Activated CD4-positive, alpha-beta memory T cell treated with anti-CD3 and anti-CD28 coated beads for 36 hours (primary cell): ENCODE measurements at regions of chr6 and their contacts with region 1.

Region 1: GRCh38 chr6:45169815-45170214 is 158.3 kb upstream of the RUNX2 start:
- DNase-seq: no peak
- H3K4me3 Mint-ChIP-seq: no peak overlapping the region
- H3K27ac Mint-ChIP-seq: no peak overlapping the region
- H3K4me1 Mint-ChIP-seq: peaks cover 23% of the 10 kb centered on the region
- H3K27me3 Mint-ChIP-seq: no peaks in the 10 kb centered on the region

Region 2: GRCh38 chr6:44989391-44989790 is 180.4 kb before region 1 on chr6:
- CTCF ChIA-PET with region 1: no interaction called
- POLR2A ChIA-PET with region 1: no interaction called
- intact Hi-C with region 1: no loop called
- DNase-seq: no peak
- H3K4me3 Mint-ChIP-seq: no peak overlapping the region
- H3K27ac Mint-ChIP-seq: no peak overlapping the region
- H3K4me1 Mint-ChIP-seq: peaks cover 3% of the 10 kb centered on the region
- H3K27me3 Mint-ChIP-seq: no peaks in the 10 kb centered on the region

Region 3: DNA sequence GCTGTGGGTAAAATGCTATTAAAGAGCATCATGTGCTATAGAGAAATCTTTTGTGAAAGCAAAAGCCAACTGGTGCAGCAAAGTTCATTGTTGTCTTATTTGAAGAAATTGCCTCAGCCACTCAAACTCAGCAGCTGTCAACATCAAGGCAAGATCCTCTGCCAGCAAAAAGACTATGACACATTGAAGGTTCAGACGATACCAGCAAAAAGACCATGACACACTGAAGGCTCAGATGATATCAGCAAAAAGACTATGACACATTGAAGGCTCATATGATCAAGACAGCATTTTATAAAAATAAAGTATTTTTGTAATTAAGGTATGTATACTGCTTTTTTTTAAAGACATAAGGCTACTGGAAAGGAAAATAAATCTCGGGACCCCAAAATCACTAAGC is 39.9 kb after region 1 on chr6:
- CTCF ChIA-PET with region 1: no interaction called
- POLR2A ChIA-PET with region 1: no interaction called
- intact Hi-C with region 1: loop called (anchors 5 kb)
- DNase-seq: no peak
- H3K4me3 Mint-ChIP-seq: no peak overlapping the region
- H3K27ac Mint-ChIP-seq: no peak overlapping the region
- H3K4me1 Mint-ChIP-seq: peaks cover 14% of the 10 kb centered on the region
- H3K27me3 Mint-ChIP-seq: no peaks in the 10 kb centered on the region